ENCODE measurements at regions of chr15 and their contacts with region 1.

Region 1: DNA sequence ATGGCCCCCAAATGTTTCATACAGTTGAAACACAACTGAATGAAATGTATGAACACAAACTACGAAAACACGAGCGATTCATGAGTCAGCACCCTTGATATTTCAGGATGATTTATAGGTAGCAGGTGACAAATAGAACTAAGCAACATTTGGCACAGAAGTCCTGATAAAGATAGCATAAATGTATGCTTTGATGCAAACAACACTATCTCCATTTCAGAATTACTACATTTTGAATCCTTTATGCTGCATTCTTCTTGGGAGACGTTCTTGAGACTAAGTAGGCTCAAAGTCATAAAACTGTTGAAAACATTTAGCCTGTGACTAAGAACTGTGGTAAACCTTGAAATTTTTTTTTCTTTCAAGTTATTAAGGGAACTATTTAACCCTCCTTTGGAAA is 200.3 kb upstream of the ICE2 start:
- DNase-seq: no peak
- ATAC-seq: no peak
- H3K4me3 ChIP-seq: no peak overlapping the region
- H3K4me3 Mint-ChIP-seq: no peak overlapping the region
- H3K27ac ChIP-seq: no peak overlapping the region
- H3K27ac Mint-ChIP-seq: no peak overlapping the region
- H3K4me1 ChIP-seq: no peaks in the 10 kb centered on the region
- H3K4me1 Mint-ChIP-seq: peaks cover 0 to 6% (median 2%) of the 10 kb centered on the region in 3 donors
- H3K27me3 ChIP-seq: no peaks in the 10 kb centered on the region
- H3K27me3 Mint-ChIP-seq: no peaks in the 10 kb centered on the region

Region 2: GRCh38 chr15:59378855-59379254 is 1300.4 kb before region 1 on chr15:
- CTCF ChIA-PET with region 1: no interaction called
- POLR2A ChIA-PET with region 1: interaction called in 1 of 2 experiments, 15 read pairs
- DNase-seq: no peak
- ATAC-seq: no peak
- H3K4me3 ChIP-seq: no peak overlapping the region
- H3K4me3 Mint-ChIP-seq: no peak overlapping the region
- H3K27ac ChIP-seq: no peak overlapping the region
- H3K27ac Mint-ChIP-seq: no peak overlapping the region
- H3K4me1 ChIP-seq: peaks cover 0 to 4% of the 10 kb centered on the region in 2 experiments
- H3K4me1 Mint-ChIP-seq: peaks cover 0 to 1% (median 1%) of the 10 kb centered on the region in 3 donors
- H3K27me3 ChIP-seq: peaks cover 0 to 21% of the 10 kb centered on the region in 2 experiments
- H3K27me3 Mint-ChIP-seq: peaks cover 18 to 20% of the 10 kb centered on the region in 2 donors